ENCODE measurements at regions of chr17 and their contacts with region 1.

Region 1: DNA sequence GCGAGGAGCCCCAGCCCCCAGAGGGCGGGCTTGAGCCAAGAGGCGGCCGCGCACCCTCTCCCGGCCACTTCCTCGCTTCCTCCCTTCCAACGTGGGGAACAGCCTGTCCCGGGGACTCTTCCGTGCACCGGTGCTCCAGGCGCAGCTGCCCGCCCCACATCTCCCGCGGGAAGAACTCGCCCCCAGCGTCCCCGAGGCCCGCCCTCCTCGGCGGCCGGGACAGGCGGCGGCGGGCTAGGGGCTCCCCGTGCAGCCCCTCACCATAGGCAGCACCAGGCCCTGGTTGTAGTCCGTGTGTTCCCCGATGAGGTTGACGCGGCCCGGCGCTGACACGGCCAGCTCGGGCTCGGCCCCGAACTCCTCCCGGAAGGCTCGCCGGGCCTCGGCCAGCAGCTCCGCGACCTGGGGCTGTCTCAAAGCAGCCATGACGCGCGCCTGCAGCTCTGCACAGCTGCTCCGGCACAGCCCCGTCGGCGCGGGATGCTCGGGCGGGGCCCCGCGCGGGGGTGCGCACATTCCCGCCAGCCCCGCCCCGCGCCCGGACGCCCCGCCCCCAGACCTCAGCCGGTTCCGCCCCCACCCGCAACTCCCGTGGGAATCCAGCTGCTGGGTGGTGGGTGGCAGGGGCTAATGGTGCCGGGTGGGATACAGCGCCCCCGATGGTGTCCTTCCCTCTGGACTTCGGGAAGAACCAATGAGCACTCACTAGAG is at the start of gene GALK1:
- DNase-seq: peak; percentile 74
- ATAC-seq: peak; percentile 95
- H3K4me3 Mint-ChIP-seq: peak within 1 kb of the TSS; percentile 81
- H3K27ac Mint-ChIP-seq: peak within 1 kb of the TSS; percentile 53
- H3K4me1 Mint-ChIP-seq: peaks cover 16% of the 10 kb centered on the region
- H3K27me3 Mint-ChIP-seq: no peaks in the 10 kb centered on the region
- CTCF ChIP-seq: no peak
- total RNA-seq, gene GALK1: 14.9 and 22.9 TPM in 2 replicates

Region 2: GRCh38 chr17:75576661-75577060 is 188.2 kb before region 1 on chr17:
- CTCF ChIA-PET with region 1: no interaction called
- POLR2A ChIA-PET with region 1: interaction called, 20 read pairs
- intact Hi-C with region 1: no loop called
- DNase-seq: no peak
- ATAC-seq: no peak
- H3K4me3 Mint-ChIP-seq: no peak overlapping the region
- H3K27ac Mint-ChIP-seq: no peak overlapping the region
- H3K4me1 Mint-ChIP-seq: no peaks in the 10 kb centered on the region
- H3K27me3 Mint-ChIP-seq: no peaks in the 10 kb centered on the region
- CTCF ChIP-seq: no peak

Region 3: GRCh38 chr17:75827252-75828115 is 62.6 kb after region 1 on chr17:
- CTCF ChIA-PET with region 1: interaction called, 54 read pairs
- POLR2A ChIA-PET with region 1: interaction called, 8 read pairs
- intact Hi-C with region 1: loop called (anchors 1 kb)
- DNase-seq: peak; percentile 64
- ATAC-seq: peak; percentile 85
- H3K4me3 Mint-ChIP-seq: peak overlapping the region; percentile 64
- H3K27ac Mint-ChIP-seq: peak overlapping the region; percentile 79
- H3K4me1 Mint-ChIP-seq: peaks cover 16% of the 10 kb centered on the region
- H3K27me3 Mint-ChIP-seq: no peaks in the 10 kb centered on the region
- CTCF ChIP-seq: no peak

Region 4: DNA sequence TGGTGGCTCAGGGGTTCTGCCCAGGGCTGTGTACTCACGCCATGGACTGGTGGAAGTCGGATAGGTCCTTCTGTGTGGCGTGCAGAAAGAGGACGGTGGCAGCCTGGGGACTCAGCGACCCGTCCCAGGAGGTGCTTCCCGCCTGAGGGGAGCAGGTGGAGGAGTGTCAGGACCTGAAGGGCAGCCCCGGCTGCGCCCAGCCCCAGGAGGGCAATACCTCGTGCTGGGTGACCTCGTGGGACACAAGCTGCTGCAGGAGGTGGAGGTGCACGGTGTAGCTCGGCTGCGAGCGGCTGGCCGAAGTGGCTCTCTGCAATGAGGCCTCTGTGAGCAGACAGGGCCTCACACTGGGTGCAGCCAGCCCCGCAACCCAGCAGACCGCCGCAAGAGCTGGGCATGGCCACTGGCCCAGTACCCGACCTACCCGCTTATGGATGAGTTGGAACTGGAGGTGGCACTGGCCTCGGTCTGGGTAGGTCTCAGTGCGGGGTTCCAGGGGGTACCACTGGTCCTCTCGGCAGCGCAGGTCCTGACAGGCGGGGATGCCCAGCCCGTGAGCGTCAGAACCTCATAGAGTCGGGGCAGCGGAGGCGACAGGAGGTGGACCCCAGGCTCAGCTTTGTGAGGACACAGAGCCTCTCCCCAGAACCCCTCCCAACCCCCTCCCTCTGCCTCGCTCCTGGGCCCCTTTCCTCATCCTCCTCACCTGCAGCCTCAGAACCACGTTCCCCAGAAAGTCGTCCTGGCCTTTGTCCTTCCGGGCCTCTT is 75.1 kb after region 1 on chr17:
- CTCF ChIA-PET with region 1: interaction called, 3 read pairs
- POLR2A ChIA-PET with region 1: interaction called, 19 read pairs
- intact Hi-C with region 1: no loop called
- DNase-seq: no peak
- ATAC-seq: no peak
- H3K4me3 Mint-ChIP-seq: no peak overlapping the region
- H3K27ac Mint-ChIP-seq: no peak overlapping the region
- H3K4me1 Mint-ChIP-seq: peaks cover 13% of the 10 kb centered on the region
- H3K27me3 Mint-ChIP-seq: no peaks in the 10 kb centered on the region
- CTCF ChIP-seq: no peak

Region 5: DNA sequence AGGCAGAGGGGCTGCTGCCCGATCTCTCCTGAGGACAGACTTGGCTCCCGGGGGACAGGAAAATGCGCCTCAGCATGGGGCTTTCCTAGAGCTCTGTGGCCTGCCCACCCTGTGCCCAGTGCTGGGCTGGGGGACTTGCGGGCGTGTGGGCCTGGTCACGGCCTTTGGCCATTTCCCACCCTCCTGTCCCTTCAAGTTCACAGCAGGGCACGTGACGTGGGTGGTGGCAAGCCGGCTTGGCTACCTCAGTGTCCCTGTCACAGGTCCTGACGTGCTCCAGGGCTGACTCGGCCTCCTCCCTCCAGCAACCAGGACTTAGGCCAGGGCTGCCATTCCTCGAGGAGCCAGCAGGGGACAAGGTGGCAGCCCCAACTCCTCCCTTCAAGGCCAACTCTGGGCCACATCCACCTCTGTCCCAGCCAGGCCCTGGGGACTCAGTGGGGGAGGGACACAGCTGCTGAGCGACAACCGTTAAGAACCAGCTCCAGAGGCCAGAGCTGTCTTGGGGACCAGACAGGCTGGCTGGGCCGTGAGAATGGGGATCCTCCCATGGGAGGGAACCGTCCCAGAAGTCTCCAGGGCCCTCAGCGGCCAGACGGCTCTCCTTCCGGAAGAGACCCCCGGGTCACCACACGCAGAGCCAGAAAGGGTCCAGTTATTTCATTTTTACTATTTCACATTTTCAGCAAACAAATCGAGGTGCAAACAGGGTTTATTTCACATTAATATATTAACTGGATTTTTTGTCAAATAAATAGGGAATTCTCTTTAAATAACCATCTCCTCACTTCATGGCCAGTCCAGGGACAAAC is 80.4 kb after region 1 on chr17:
- CTCF ChIA-PET with region 1: interaction called, 6 read pairs
- POLR2A ChIA-PET with region 1: interaction called, 19 read pairs
- intact Hi-C with region 1: no loop called
- DNase-seq: peak; percentile 71
- ATAC-seq: peak; percentile 90
- H3K4me3 Mint-ChIP-seq: peak overlapping the region; percentile 66
- H3K27ac Mint-ChIP-seq: peak overlapping the region; percentile 75
- H3K4me1 Mint-ChIP-seq: peaks cover 29% of the 10 kb centered on the region
- H3K27me3 Mint-ChIP-seq: no peaks in the 10 kb centered on the region
- CTCF ChIP-seq: no peak

Region 6: GRCh38 chr17:76005263-76006149 is 240.6 kb after region 1 on chr17:
- CTCF ChIA-PET with region 1: interaction called, 10 read pairs
- POLR2A ChIA-PET with region 1: no interaction called
- intact Hi-C with region 1: no loop called
- DNase-seq: peak; percentile 73
- ATAC-seq: peak; percentile 85
- H3K4me3 Mint-ChIP-seq: no peak overlapping the region
- H3K27ac Mint-ChIP-seq: peak overlapping the region; percentile 24
- H3K4me1 Mint-ChIP-seq: no peaks in the 10 kb centered on the region
- H3K27me3 Mint-ChIP-seq: no peaks in the 10 kb centered on the region
- CTCF ChIP-seq: no peak

Measured in activated B cell treated with CpG ODN at 0.5 μM for 24 hours (primary cell).